AG04450 (cell line): ENCODE measurements at regions of chr16 and their contacts with region 1.

Region 1: GRCh38 chr16:50024684-50025536 is at the start of gene CNEP1R1:
- DNase-seq: peak; percentile 93
- H3K4me3 ChIP-seq: peak within 1 kb of the TSS; percentile 85
- H3K27ac ChIP-seq: no peak within 1 kb of the TSS
- H3K27me3 ChIP-seq: no peaks in the 10 kb centered on the region
- CTCF ChIP-seq: peak; percentile 100
- polyA plus RNA-seq, gene CNEP1R1: 22.4 and 33.0 TPM in 2 replicates

Region 2: GRCh38 chr16:49643429-49644144 is 381.3 kb before region 1 on chr16:
- CTCF ChIA-PET with region 1: interaction called, 18 read pairs
- POLR2A ChIA-PET with region 1: no interaction called
- DNase-seq: no peak
- H3K4me3 ChIP-seq: no peak overlapping the region
- H3K27ac ChIP-seq: peak overlapping the region; percentile 48
- H3K27me3 ChIP-seq: no peaks in the 10 kb centered on the region
- CTCF ChIP-seq: no peak

Region 3: GRCh38 chr16:49964973-49965372 is 59.9 kb before region 1 on chr16:
- CTCF ChIA-PET with region 1: no interaction called
- POLR2A ChIA-PET with region 1: no interaction called
- DNase-seq: no peak
- H3K4me3 ChIP-seq: no peak overlapping the region
- H3K27ac ChIP-seq: no peak overlapping the region
- H3K27me3 ChIP-seq: peaks cover 6% of the 10 kb centered on the region
- CTCF ChIP-seq: no peak

Region 4: GRCh38 chr16:50038756-50039529 is 14.0 kb after region 1 on chr16:
- CTCF ChIA-PET with region 1: interaction called, 48 read pairs
- POLR2A ChIA-PET with region 1: interaction called, 3 read pairs
- DNase-seq: no peak
- H3K4me3 ChIP-seq: no peak overlapping the region
- H3K27ac ChIP-seq: peak overlapping the region; percentile 12
- H3K27me3 ChIP-seq: peaks cover 3% of the 10 kb centered on the region
- CTCF ChIP-seq: no peak

Region 5: GRCh38 chr16:50096791-50097190 is 71.9 kb after region 1 on chr16:
- CTCF ChIA-PET with region 1: interaction called, 11 read pairs
- POLR2A ChIA-PET with region 1: no interaction called
- DNase-seq: peak; percentile 24
- H3K4me3 ChIP-seq: no peak overlapping the region
- H3K27ac ChIP-seq: no peak overlapping the region
- H3K27me3 ChIP-seq: no peaks in the 10 kb centered on the region
- CTCF ChIP-seq: no peak

Region 6: DNA sequence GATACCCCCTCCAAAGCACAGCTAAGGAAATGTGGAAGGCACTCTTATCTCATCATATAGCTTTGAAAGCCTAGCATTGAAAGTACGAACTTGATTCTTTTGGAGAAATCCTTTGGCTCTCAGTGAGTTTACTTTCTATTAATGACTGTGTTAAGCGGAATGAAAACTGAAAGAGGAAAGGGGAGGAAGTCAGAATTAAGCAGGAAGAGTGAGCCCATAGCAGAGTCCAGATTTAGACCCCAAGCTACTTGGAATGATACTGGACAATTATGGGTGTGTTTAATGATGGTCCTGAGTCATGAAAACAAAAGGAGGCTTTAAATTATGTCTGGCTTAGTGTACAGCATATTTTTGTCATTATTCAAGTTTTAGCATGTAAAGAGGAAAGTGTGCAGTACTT is 170.4 kb after region 1 on chr16:
- CTCF ChIA-PET with region 1: interaction called, 23 read pairs
- POLR2A ChIA-PET with region 1: interaction called, 3 read pairs
- DNase-seq: no peak
- H3K4me3 ChIP-seq: peak overlapping the region; percentile 18
- H3K27ac ChIP-seq: peak overlapping the region; percentile 57
- H3K27me3 ChIP-seq: no peaks in the 10 kb centered on the region
- CTCF ChIP-seq: no peak

Region 7: DNA sequence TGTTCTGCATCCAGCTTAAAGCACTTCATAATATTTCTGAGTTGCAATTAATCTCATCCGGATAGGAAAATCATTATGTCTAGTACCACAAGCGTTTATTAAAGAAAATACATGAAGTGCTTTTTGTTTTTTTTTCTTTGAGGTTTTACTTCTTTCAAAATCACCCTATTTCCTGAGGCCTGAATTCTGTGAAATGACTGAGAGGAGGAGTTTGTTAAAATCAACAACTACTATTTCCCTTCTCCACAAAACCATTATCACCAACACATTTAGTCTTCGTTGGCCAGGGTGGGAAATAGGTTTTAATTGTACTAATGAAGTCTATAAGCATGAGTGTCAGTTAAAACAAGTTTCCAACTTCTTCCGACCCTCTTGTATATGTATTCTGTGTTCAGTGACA is 190.8 kb after region 1 on chr16:
- CTCF ChIA-PET with region 1: interaction called, 216 read pairs
- POLR2A ChIA-PET with region 1: no interaction called
- DNase-seq: no peak
- H3K4me3 ChIP-seq: no peak overlapping the region
- H3K27ac ChIP-seq: no peak overlapping the region
- H3K27me3 ChIP-seq: no peaks in the 10 kb centered on the region
- CTCF ChIP-seq: no peak

Region 8: DNA sequence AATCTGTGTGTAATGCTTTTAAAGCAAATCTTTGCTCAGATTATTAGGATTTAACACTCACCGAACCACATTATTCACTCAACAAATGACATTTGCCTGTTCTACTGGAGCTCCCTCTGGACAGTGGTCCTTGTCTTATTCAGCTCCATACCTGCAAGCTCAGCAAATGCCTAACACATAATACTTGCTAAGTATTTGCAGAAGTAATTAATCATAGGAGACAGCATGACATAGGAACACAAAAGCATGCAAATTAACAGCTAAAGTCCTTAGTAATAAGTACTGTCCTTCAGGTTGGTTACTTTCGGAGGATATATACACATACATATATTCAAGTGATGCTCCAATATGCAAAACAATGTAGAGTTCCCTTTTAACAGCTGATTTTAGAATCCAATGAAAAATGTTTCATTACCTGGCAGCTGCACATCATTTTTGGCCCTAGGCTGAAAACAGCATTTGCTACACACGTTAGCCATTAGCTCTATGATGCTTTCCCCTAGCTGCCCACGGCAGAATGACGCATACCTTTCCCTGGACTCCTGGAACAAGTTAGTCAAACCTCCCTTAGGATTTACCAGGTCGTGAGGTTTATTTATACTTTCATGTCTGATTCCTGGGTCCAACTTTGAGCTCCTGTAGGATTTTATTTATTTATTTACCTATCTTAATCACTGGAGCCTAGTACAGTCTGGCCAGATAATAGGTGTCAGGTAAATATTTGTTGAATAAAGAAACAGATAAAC is 335.3 kb after region 1 on chr16:
- CTCF ChIA-PET with region 1: interaction called, 35 read pairs
- POLR2A ChIA-PET with region 1: no interaction called
- DNase-seq: no peak
- H3K4me3 ChIP-seq: no peak overlapping the region
- H3K27ac ChIP-seq: no peak overlapping the region
- H3K27me3 ChIP-seq: no peaks in the 10 kb centered on the region
- CTCF ChIP-seq: no peak

Region 9: DNA sequence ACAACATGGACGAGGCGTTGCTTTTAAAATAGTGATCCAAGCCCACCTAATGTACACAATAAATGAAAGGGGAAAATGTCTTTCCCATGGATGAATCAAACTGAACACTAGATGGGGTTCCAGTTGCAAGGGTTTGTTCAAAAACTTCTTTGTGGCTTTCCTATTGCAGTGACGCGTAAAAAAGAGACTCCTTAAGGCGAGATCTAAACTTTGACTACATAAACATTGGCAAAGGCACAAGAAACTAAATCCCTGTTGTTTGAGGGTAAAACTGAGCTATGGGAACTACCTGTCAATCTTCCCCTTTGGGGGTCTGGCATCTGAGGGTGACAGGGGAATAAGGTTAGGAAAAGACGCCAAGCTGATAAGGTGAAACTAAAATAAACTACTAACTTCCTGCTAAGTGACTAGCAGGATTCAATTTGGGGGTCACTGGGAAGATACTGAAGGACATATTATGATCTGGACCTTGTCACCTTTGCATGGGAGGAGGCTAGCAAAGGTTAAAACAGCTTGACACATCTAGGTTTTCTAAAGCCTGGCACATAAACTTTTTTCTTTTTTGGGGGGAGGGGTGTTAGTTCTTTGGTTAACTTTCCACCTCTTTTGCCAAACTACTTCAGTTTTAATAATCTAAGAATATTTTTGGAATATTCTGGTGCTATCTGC is 1121.5 kb after region 1 on chr16:
- CTCF ChIA-PET with region 1: no interaction called
- POLR2A ChIA-PET with region 1: no interaction called
- DNase-seq: no peak
- H3K4me3 ChIP-seq: peak overlapping the region; percentile 24
- H3K27ac ChIP-seq: no peak overlapping the region
- H3K27me3 ChIP-seq: no peaks in the 10 kb centered on the region
- CTCF ChIP-seq: peak; percentile 72